Colonic mucosa (tissue), 4 donors: ENCODE measurements at regions of chr19 and their contacts with region 1.

Region 1: GRCh38 chr19:17305517-17306284 is at the start of gene MRPL34:
- DNase-seq: peak; percentile 97
- H3K4me3 ChIP-seq: peak within 1 kb of the TSS; percentile 72
- H3K27ac ChIP-seq: peak within 1 kb of the TSS; percentile 93
- H3K4me1 ChIP-seq: peaks cover 22% of the 10 kb centered on the region
- H3K27me3 ChIP-seq: no peaks in the 10 kb centered on the region
- CTCF ChIP-seq: peak; percentile 63
- total RNA-seq, gene MRPL34: 127 to 184 TPM

Region 2: GRCh38 chr19:17323964-17324332 is 18.2 kb after region 1 on chr19:
- intact Hi-C with region 1: no loop called
- DNase-seq: no peak
- H3K4me3 ChIP-seq: no peak overlapping the region
- H3K27ac ChIP-seq: no peak overlapping the region
- H3K4me1 ChIP-seq: peaks cover 4% of the 10 kb centered on the region
- H3K27me3 ChIP-seq: peaks cover 2% of the 10 kb centered on the region
- CTCF ChIP-seq: no peak

Region 3: GRCh38 chr19:17334414-17335409 is 29.0 kb after region 1 on chr19 and contains the start of gene ANO8:
- intact Hi-C with region 1: loop called (anchors 2 kb)
- DNase-seq: peak; percentile 99
- H3K4me3 ChIP-seq: peak within 1 kb of the TSS; percentile 82
- H3K27ac ChIP-seq: peak within 1 kb of the TSS; percentile 74
- H3K4me1 ChIP-seq: peaks cover 18% of the 10 kb centered on the region
- H3K27me3 ChIP-seq: peaks cover 1% of the 10 kb centered on the region
- CTCF ChIP-seq: no peak
- total RNA-seq, gene ANO8: 8.9 to 13.7 TPM